PC-9 (cell line): ENCODE measurements at regions of chr1 and their contacts with region 1.

Region 1: DNA sequence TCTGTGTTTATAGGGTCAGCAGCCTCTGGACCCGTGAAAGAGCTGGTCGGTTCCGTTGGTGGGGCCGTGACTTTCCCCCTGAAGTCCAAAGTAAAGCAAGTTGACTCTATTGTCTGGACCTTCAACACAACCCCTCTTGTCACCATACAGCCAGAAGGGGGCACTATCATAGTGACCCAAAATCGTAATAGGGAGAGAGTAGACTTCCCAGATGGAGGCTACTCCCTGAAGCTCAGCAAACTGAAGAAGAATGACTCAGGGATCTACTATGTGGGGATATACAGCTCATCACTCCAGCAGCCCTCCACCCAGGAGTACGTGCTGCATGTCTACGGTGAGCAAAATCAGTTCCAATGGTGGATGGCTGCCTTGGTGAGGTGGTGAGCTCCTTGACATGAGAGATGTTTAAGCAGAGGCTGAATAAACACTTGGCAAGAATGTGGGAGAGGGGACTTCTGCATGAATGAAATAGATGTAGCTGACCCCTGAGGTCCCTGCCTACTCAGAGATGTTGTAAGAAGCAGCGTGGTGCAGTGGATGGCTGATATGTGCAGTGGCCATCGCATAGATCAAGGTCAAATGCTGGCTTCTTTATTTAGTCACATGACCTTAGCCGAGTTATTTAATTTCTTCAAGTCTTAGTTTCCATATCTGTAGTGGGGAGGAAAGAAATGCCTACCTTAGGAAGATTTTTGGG is 9.3 kb downstream of the SLAMF7 start:
- DNase-seq: peak; percentile 19 to 43
- H3K4me3 ChIP-seq: no peak overlapping the region
- H3K27ac ChIP-seq: no peak overlapping the region
- H3K4me1 ChIP-seq: peaks cover 22% of the 10 kb centered on the region
- H3K27me3 ChIP-seq: peaks cover 26% of the 10 kb centered on the region
- CTCF ChIP-seq: peak; percentile 40; the same call in 1 of the 2 replicates

Region 2: GRCh38 chr1:160726498-160727315 is 21.6 kb before region 1 on chr1:
- CTCF ChIA-PET with region 1: no interaction called
- POLR2A ChIA-PET with region 1: no interaction called
- intact Hi-C with region 1: loop called (anchors 1 kb)
- DNase-seq: peak; percentile 51 to 63
- H3K4me3 ChIP-seq: no peak overlapping the region
- H3K27ac ChIP-seq: peak overlapping the region; percentile 50
- H3K4me1 ChIP-seq: peaks cover 18% of the 10 kb centered on the region
- H3K27me3 ChIP-seq: no peaks in the 10 kb centered on the region
- CTCF ChIP-seq: peak; percentile 93